Posterior vena cava (tissue), 2 donors: ENCODE measurements at regions of chr17 and their contacts with region 1.

Region 1: GRCh38 chr17:77319211-77320043 is 178.7 kb downstream of the SEC14L1 start:
- DNase-seq: peak; percentile 96

Region 2: GRCh38 chr17:77280980-77281903 is 38.2 kb before region 1 on chr17:
- intact Hi-C with region 1: loop called in 1 of 2 experiments (anchors 5 kb)
- DNase-seq: no peak